ENCODE measurements at regions of chr6 and their contacts with region 1.

Region 1: GRCh38 chr6:27893059-27893835 is 18.9 kb downstream of the OR2B2 start:
- DNase-seq: peak; percentile 81
- H3K4me3 ChIP-seq: peak overlapping the region; percentile 75 to 93
- H3K27ac ChIP-seq: peak overlapping the region; percentile 84 to 98
- H3K4me1 ChIP-seq: peaks cover 11 to 21% of the 10 kb centered on the region in 2 experiments; a peak in 3 of 4 replicates
- H3K27me3 ChIP-seq: no peaks in the 10 kb centered on the region
- CTCF ChIP-seq: no peak
- EP300 ChIP-seq: 0 out of 4 replicates have a peak, but pooled peaks of 1 of the 2 experiments have one; percentile 68
- RAD21 ChIP-seq: no peak

Region 2: DNA sequence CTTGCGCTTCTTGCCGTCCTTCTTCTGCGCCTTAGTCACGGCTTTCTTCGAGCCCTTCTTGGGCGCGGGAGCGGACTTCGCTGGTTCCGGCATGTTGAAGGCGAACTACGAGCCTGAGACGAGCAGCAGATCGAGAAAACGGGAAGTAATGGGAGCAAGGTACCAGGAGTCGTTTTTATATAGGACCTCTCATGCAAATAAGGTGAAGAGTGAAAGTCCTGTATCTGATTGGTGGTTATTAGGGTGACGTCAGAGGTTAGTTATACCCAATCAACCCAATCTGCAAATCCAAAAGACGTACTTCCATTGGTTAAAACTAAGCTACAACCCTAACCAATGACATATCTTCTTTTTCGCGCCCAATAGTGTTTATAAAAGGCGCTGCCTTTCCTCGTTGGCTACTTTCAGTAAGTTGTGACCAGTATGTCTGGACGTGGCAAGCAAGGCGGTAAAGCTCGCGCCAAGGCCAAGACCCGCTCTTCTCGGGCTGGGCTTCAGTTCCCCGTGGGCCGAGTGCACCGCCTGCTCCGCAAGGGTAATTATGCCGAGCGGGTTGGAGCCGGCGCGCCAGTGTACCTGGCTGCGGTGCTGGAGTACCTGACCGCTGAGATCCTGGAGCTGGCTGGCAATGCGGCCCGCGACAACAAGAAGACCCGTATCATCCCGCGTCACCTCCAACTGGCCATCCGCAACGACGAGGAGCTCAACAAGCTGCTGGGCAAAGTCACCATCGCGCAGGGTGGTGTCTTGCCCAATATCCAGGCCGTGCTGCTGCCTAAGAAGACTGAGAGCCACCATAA is 746.3 kb before region 1 on chr6:
- CTCF ChIA-PET with region 1: interaction called, 4 read pairs
- POLR2A ChIA-PET with region 1: interaction called, 36 read pairs
- DNase-seq: peak; percentile 91
- H3K4me3 ChIP-seq: peak overlapping the region; percentile 66 to 94
- H3K27ac ChIP-seq: peak overlapping the region; percentile 94 to 96
- H3K4me1 ChIP-seq: peaks cover 0 to 8% of the 10 kb centered on the region in 2 experiments; a peak in 2 of 4 replicates
- H3K27me3 ChIP-seq: no peaks in the 10 kb centered on the region
- CTCF ChIP-seq: no peak
- EP300 ChIP-seq: peak in 1 of 2 experiments; percentile 32; a peak in 1 of 4 replicates
- RAD21 ChIP-seq: no peak

Region 3: DNA sequence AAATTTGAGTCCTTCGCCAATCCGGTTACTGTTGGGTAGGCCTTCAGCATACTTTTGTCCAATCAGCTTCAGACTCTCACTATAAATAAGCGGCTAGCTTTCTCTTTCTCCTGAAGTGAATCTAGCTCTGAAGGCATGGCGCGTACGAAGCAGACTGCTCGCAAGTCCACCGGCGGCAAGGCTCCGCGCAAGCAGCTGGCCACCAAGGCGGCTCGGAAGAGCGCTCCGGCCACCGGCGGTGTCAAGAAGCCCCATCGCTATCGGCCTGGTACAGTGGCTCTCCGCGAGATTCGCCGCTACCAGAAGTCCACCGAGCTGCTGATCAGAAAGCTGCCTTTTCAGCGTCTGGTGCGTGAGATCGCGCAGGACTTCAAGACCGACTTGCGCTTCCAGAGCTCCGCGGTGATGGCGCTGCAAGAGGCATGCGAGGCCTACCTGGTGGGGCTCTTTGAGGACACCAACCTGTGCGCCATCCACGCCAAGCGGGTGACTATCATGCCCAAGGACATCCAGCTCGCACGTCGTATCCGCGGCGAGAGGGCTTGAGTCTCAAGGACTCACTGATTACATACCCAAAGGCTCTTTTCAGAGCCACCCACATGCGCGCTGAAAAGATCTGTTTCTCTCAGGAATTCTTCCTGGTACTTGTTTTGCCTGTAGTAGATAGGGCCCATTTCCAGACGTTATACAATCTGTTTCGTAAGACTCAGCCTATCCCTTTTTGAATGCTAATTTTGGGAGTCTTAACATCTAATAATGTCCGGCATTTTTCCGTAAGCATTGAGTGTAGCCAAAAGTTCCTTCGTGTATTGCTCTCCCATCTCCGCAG is 83.1 kb before region 1 on chr6:
- CTCF ChIA-PET with region 1: interaction called, 36 read pairs
- POLR2A ChIA-PET with region 1: interaction called, 218 read pairs
- DNase-seq: peak; percentile 74
- H3K4me3 ChIP-seq: peak overlapping the region; percentile 69 to 83
- H3K27ac ChIP-seq: peak overlapping the region; percentile 80 to 99
- H3K4me1 ChIP-seq: peaks cover 3 to 12% of the 10 kb centered on the region in 2 experiments; a peak in 3 of 4 replicates
- H3K27me3 ChIP-seq: no peaks in the 10 kb centered on the region
- CTCF ChIP-seq: peak; percentile 31
- EP300 ChIP-seq: peak in 1 of 2 experiments; percentile 61; a peak in 1 of 4 replicates
- RAD21 ChIP-seq: no peak

Region 4: DNA sequence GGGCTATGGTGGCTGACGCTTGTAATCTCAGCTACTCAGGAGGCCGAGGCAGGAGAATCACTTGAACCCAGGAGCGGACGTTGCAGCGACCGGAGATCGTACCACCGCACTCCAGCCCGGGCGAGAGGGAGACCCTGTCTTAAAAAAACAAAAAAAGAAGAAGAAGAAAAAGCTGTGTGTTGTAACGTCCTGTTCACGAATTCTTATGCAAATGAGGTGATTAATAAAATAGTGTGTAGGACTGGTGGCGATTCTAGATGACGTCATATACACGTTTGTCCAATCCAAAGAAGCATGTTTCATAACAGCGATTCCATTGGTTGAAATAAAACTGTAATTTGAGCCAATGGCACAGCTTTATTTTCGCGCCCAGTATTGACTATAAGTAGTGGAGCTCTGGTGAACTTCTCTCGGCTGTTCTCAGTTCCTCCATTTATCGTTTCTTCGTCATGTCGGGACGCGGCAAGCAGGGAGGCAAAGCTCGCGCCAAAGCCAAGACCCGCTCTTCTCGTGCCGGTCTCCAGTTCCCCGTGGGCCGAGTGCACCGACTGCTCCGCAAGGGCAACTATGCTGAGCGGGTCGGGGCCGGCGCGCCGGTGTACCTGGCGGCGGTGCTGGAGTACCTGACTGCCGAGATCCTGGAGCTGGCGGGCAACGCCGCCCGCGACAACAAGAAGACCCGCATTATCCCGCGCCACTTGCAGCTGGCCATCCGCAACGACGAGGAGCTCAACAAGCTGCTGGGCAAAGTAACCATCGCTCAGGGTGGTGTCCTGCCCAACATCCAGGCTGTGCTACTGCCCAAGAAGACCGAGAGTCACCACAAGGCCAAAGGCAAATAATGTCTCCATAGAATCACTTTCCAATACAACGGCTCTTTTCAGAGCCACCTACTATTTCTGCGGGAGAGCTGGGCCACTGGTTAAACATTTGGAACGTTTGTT is 28.1 kb before region 1 on chr6:
- CTCF ChIA-PET with region 1: interaction called, 4 read pairs
- POLR2A ChIA-PET with region 1: interaction called, 155 read pairs
- DNase-seq: peak; percentile 85
- H3K4me3 ChIP-seq: peak overlapping the region; percentile 47 to 80
- H3K27ac ChIP-seq: peak overlapping the region; percentile 80 to 97
- H3K4me1 ChIP-seq: peaks cover 0 to 20% of the 10 kb centered on the region in 2 experiments; a peak in 2 of 4 replicates
- H3K27me3 ChIP-seq: no peaks in the 10 kb centered on the region
- CTCF ChIP-seq: no peak
- EP300 ChIP-seq: no peak; a peak in 1 of 4 replicates
- RAD21 ChIP-seq: no peak

Region 5: DNA sequence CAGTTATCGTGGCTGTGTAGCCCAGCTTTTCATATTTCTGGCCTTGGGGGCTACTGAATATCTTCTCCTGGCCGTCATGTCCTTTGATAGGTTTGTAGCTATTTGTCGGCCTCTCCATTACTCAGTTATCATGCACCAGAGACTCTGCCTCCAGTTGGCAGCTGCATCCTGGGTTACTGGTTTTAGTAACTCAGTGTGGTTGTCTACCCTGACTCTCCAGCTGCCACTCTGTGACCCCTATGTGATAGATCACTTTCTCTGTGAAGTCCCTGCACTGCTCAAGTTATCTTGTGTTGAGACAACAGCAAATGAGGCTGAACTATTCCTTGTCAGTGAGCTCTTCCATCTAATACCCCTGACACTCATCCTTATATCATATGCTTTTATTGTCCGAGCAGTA is 64.3 kb after region 1 on chr6:
- CTCF ChIA-PET with region 1: no interaction called
- POLR2A ChIA-PET with region 1: no interaction called
- DNase-seq: no peak
- H3K4me3 ChIP-seq: no peak overlapping the region
- H3K27ac ChIP-seq: no peak overlapping the region
- H3K4me1 ChIP-seq: no peaks in the 10 kb centered on the region
- H3K27me3 ChIP-seq: no peaks in the 10 kb centered on the region
- CTCF ChIP-seq: no peak
- EP300 ChIP-seq: no peak
- RAD21 ChIP-seq: no peak

Region 6: GRCh38 chr6:28176373-28176772 is 283.1 kb after region 1 on chr6:
- CTCF ChIA-PET with region 1: no interaction called
- POLR2A ChIA-PET with region 1: no interaction called
- DNase-seq: no peak
- H3K4me3 ChIP-seq: no peak overlapping the region
- H3K27ac ChIP-seq: no peak overlapping the region
- H3K4me1 ChIP-seq: no peaks in the 10 kb centered on the region
- H3K27me3 ChIP-seq: no peaks in the 10 kb centered on the region
- CTCF ChIP-seq: no peak
- EP300 ChIP-seq: no peak
- RAD21 ChIP-seq: no peak

Region 7: GRCh38 chr6:28863604-28864320 is 970.5 kb after region 1 on chr6:
- CTCF ChIA-PET with region 1: no interaction called
- POLR2A ChIA-PET with region 1: interaction called, 32 read pairs
- DNase-seq: peak; percentile 69
- H3K4me3 ChIP-seq: peak overlapping the region; percentile 91 to 97
- H3K27ac ChIP-seq: peak overlapping the region; percentile 61 to 76
- H3K4me1 ChIP-seq: peaks cover 0 to 11% of the 10 kb centered on the region in 2 experiments; a peak in 2 of 4 replicates
- H3K27me3 ChIP-seq: peaks cover 8% of the 10 kb centered on the region; the same call in 1 of the 2 replicates
- CTCF ChIP-seq: no peak
- EP300 ChIP-seq: no peak
- RAD21 ChIP-seq: no peak

Measured in SK-N-SH (cell line).